Pancreas (tissue), 10 donors: ENCODE measurements at regions of chr11 and their contacts with region 1.

Region 1: GRCh38 chr11:70467201-70468085 is 69.1 kb downstream of the CTTN start:
- DNase-seq: peak in 5 of 6 donors; percentile 26 to 88 (median 57)
- ATAC-seq: peak; percentile 68 to 83 (median 80)
- H3K4me3 ChIP-seq: no peak overlapping the region
- H3K27ac ChIP-seq: no peak overlapping the region
- H3K4me1 ChIP-seq: peaks cover 0 to 3% (median 0%) of the 10 kb centered on the region in 3 donors
- H3K27me3 ChIP-seq: no peaks in the 10 kb centered on the region
- CTCF ChIP-seq: peak; percentile 37 to 79 (median 67)

Region 2: GRCh38 chr11:70281156-70281609 is 186.3 kb before region 1 on chr11:
- intact Hi-C with region 1: no loop called
- DNase-seq: no peak
- ATAC-seq: peak in 2 of 4 donors; percentile 19
- H3K4me3 ChIP-seq: no peak overlapping the region
- H3K27ac ChIP-seq: no peak overlapping the region
- H3K4me1 ChIP-seq: no peaks in the 10 kb centered on the region
- H3K27me3 ChIP-seq: no peaks in the 10 kb centered on the region
- CTCF ChIP-seq: no peak

Region 3: DNA sequence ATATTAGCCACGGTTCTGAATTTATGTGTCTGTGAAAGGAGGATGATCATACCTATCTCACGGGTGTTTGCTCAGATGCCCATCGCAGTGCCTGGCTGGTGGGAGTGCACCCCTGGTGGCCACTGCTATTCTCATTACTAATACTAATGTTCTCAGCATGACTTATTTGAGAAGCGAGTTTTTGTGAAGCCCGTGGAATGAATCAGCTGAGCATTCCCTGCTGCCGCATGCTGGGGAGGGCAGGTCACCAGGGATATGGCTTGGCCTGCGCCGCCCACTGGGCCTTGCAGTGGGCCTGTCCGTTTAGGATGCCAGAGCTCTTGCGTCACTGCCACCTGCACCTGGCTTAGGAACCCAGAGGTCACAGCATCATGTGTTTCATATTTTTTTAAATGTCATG is 52.3 kb before region 1 on chr11:
- intact Hi-C with region 1: no loop called
- DNase-seq: peak in 1 of 6 donors; percentile 12
- ATAC-seq: peak in 1 of 4 donors; percentile 22
- H3K4me3 ChIP-seq: no peak overlapping the region
- H3K27ac ChIP-seq: no peak overlapping the region
- H3K4me1 ChIP-seq: no peaks in the 10 kb centered on the region
- H3K27me3 ChIP-seq: no peaks in the 10 kb centered on the region
- CTCF ChIP-seq: no peak

Region 4: GRCh38 chr11:70755410-70756161 is 288.1 kb after region 1 on chr11:
- intact Hi-C with region 1: loop called in 2 of 3 experiments (anchors 5 to 10 kb)
- DNase-seq: peak in 5 of 6 donors; percentile 39 to 89 (median 60)
- ATAC-seq: peak; percentile 67 to 99 (median 91)
- H3K4me3 ChIP-seq: no peak overlapping the region
- H3K27ac ChIP-seq: no peak overlapping the region
- H3K4me1 ChIP-seq: no peaks in the 10 kb centered on the region
- H3K27me3 ChIP-seq: no peaks in the 10 kb centered on the region
- CTCF ChIP-seq: peak; percentile 52 to 83 (median 66)

Region 5: GRCh38 chr11:70763606-70764005 is 296.2 kb after region 1 on chr11:
- intact Hi-C with region 1: loop called in 2 of 3 experiments (anchors 5 to 10 kb)
- DNase-seq: no peak
- ATAC-seq: no peak
- H3K4me3 ChIP-seq: no peak overlapping the region
- H3K27ac ChIP-seq: no peak overlapping the region
- H3K4me1 ChIP-seq: no peaks in the 10 kb centered on the region
- H3K27me3 ChIP-seq: no peaks in the 10 kb centered on the region
- CTCF ChIP-seq: no peak